Ascending aorta (tissue), 2 donors: ENCODE measurements at regions of chr12 and their contacts with region 1.

Region 1: DNA sequence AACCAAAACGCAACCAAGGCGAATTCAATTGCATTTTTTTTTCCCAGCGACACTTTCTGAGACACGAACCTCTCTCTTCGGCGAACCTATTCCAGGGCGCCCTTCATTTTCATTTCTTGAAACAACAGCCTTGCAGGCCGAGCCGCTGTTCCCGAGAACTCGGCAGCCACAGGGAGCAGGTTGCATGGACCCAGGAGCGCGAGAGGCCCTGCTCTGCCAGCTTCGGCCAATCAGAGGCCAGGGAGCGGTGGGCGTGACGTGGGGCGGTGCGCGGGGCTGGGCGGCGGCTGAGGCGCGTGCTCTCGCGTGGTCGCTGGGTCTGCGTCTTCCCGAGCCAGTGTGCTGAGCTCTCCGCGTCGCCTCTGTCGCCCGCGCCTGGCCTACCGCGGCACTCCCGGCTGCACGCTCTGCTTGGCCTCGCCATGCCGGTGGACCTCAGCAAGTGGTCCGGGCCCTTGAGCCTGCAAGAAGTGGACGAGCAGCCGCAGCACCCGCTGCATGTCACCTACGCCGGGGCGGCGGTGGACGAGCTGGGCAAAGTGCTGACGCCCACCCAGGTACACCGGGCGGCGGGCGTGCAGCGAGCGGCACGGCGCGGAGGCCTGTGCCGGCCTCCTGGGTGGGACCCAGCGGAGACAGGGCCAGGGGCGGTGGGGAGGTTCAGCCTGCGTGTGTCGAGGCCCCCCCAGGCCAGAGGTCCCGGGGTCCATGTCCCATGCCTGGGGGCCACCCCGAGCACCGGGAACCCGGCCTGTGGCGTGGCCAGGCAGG is at the start of gene PEBP1:
- DNase-seq: peak; percentile 75 to 97
- H3K4me3 ChIP-seq: peak within 1 kb of the TSS; percentile 74 to 82
- H3K27ac ChIP-seq: peak within 1 kb of the TSS; percentile 84 to 86
- H3K4me1 ChIP-seq: peaks cover 0 to 20% of the 10 kb centered on the region in 2 donors
- H3K27me3 ChIP-seq: no peaks in the 10 kb centered on the region
- CTCF ChIP-seq: no peak
- total RNA-seq, gene PEBP1: 312 TPM

Region 2: GRCh38 chr12:118016424-118017264 is 119.3 kb before region 1 on chr12 and contains the start of gene RFC5:
- intact Hi-C with region 1: loop called (anchors 2 kb)
- DNase-seq: peak; percentile 86 to 98
- H3K4me3 ChIP-seq: peak within 1 kb of the TSS; percentile 67 to 84
- H3K27ac ChIP-seq: peak within 1 kb of the TSS in 1 of 2 donors; percentile 22
- H3K4me1 ChIP-seq: peaks cover 0 to 4% of the 10 kb centered on the region in 2 donors
- H3K27me3 ChIP-seq: no peaks in the 10 kb centered on the region
- CTCF ChIP-seq: no peak
- total RNA-seq, gene RFC5: 5.2 TPM

Region 3: DNA sequence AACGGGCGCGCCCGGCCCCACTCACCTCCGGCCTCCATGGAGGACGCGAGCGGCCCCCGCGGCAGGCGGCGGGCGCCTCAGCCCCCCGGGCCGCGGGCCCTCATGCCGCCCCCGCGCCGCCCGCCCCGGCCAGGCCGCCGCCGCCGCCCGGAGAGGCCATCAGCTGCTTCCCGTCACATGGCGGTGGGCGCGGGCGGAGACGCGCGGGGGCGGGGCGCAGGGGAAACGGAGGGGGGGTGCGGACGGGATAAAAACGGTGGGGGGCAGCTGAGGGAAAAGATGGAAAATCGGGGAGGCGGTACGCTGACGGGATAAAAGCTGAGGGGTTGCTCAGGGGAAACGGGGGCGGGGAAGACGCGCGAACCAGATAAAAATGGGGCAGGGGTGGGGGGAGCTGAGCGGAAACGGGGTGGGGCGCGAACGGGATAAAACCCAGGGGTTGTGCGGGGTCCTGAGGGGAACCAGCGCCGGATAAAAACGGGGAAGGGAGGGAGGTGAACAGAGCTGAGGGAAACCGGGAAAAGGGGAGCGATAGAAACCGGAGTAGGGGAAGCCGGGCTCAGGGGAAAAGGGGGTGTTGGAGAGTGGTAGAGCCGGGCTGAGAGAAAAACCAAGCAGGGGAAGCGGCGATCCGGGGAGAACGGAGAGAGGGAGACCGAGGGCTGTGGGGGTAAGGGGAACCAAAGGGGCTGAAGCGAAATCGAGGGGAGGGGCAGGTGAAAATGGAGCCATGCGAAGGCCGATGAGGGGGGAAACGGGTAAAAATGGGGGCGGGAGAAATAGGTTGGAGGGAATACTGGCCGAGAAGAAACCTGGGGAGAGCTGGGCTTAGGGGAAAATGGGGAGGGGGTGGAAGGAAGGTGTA is 74.7 kb before region 1 on chr12 and contains the start of gene WSB2:
- intact Hi-C with region 1: loop called (anchors 1 kb)
- DNase-seq: peak in 1 of 2 donors; percentile 88
- H3K4me3 ChIP-seq: peak within 1 kb of the TSS; percentile 75 to 86
- H3K27ac ChIP-seq: peak within 1 kb of the TSS; percentile 95 to 99
- H3K4me1 ChIP-seq: peaks cover 0 to 8% of the 10 kb centered on the region in 2 donors
- H3K27me3 ChIP-seq: no peaks in the 10 kb centered on the region
- CTCF ChIP-seq: no peak
- total RNA-seq, gene WSB2: 68.6 TPM

Region 4: DNA sequence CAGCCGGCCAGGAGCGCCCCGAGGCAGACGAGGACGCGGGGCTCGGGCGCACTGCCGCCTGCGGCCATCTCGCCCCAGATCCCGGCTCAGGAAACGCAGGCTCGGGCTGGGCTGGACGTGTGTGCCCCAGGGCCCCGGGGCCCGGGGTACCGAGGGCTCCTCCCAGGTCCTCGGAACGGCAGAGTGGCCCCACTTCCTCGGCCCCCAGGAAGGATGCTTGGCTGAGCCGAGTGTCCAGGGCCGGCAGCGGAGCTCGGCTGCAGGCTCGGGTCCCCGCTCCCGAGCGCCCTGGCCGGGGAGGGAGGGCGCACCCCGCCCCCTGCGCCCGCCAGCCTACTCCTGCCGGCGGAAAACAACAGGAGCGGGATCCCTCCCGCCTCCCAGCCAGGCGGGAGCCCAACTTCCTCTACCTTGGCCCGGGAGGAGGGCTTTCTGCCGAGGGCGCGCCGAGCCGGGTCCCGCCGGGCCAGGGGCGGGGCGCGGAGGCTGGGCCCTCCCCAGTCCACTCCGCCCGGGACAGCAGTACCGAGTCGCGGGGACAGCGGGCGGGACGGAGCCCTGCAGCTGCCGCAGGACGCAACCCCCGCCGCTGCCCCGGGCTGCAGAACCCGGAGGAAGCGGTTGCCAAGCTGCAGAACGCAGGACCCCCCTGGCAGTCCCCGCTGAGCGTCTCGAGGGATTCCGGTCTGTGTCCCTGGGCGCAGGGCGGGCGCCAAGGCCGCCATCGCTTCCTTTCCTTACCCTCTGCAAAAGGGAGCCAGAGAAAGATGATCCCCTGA is 32.2 kb before region 1 on chr12 and contains the start of gene VSIG10:
- intact Hi-C with region 1: loop called (anchors 5 kb)
- DNase-seq: peak; percentile 9 to 80
- H3K4me3 ChIP-seq: peak within 1 kb of the TSS; percentile 74 to 96
- H3K27ac ChIP-seq: peak within 1 kb of the TSS; percentile 70 to 74
- H3K4me1 ChIP-seq: no peaks in the 10 kb centered on the region
- H3K27me3 ChIP-seq: no peaks in the 10 kb centered on the region
- CTCF ChIP-seq: no peak
- total RNA-seq, gene VSIG10: 38.3 TPM

Region 5: DNA sequence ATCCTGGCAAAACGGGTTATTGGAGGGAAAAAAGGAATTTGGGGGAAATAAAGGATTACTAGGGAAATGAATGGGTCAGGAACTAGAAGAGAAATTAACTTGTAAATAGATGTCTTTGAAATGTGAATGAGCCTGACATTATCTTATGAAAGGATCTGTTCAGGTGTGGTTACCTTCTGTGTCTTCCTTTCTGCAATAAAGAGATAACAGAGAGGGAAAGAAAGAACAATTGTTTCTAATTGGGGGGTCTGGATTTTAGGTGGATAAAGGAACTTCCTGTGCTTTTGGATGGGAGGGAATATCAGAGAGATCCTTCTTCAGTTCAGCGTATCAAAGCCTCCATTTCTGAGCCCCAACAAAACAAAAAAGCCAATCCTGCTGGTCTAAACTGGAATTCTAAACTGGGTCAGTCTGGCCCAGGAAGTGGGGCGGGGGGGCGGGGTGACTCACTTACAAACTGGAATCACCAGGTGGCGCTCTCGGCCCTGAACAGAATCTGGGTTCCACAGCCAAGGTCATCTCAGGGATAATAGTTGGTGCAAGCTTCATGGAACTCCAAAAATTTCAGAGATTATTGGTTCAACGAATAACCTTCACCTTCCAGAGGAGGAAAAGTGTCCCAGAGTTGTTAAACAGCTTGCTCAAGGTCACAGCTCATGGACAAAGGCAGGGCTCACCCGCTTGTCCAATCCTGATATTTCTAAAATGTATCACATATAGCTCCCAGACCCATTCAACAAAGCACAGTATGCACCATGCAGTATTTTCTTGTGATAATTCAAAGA is 15.2 kb before region 1 on chr12:
- intact Hi-C with region 1: loop called (anchors 1 kb)
- DNase-seq: peak in 1 of 2 donors; percentile 84
- H3K4me3 ChIP-seq: no peak overlapping the region
- H3K27ac ChIP-seq: no peak overlapping the region
- H3K4me1 ChIP-seq: no peaks in the 10 kb centered on the region
- H3K27me3 ChIP-seq: no peaks in the 10 kb centered on the region
- CTCF ChIP-seq: peak; percentile 5 to 88 (median 82)

Region 6: GRCh38 chr12:118189741-118190191 is 53.8 kb after region 1 on chr12:
- intact Hi-C with region 1: loop called (anchors 5 kb)
- DNase-seq: peak in 1 of 2 donors; percentile 64
- H3K4me3 ChIP-seq: peak overlapping the region; percentile 34 to 54
- H3K27ac ChIP-seq: peak overlapping the region; percentile 64 to 78
- H3K4me1 ChIP-seq: peaks cover 0 to 12% of the 10 kb centered on the region in 2 donors
- H3K27me3 ChIP-seq: no peaks in the 10 kb centered on the region
- CTCF ChIP-seq: no peak

Region 7: DNA sequence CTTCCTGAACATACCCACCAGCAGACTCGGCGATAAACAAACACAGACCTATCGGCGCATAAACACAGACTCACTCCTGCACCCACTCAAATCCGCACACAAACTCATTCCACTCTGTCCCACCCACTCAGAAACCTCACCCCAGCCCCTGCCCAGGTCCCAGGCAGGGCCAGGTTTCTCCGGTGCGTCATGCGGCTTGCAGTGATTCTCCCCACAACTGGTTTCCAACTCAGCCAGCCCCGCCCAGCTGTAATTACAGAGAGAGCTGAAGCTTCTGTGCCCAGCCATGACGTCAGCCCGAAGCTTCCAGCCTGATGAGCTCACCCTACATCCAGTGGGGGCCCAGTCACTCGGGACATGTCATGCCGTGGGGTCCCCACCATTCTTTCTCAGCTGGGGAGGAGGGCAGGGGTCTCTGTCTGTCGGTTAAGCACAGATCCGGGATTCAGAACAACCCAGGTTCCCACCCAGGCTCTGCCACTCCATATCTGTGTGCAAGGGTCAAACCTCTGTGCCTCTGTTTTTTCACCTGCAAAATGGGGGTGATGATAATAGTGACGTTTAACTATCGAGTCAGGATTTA is 1040.4 kb after region 1 on chr12:
- intact Hi-C with region 1: loop called (anchors 10 kb)
- DNase-seq: peak; percentile 90 to 99
- H3K4me3 ChIP-seq: peak overlapping the region; percentile 38 to 71
- H3K27ac ChIP-seq: peak overlapping the region; percentile 96 to 97
- H3K4me1 ChIP-seq: peaks cover 4 to 25% of the 10 kb centered on the region in 2 donors
- H3K27me3 ChIP-seq: no peaks in the 10 kb centered on the region
- CTCF ChIP-seq: no peak